ENCODE measurements at regions of chr4 and their contacts with region 1.

Region 1: DNA sequence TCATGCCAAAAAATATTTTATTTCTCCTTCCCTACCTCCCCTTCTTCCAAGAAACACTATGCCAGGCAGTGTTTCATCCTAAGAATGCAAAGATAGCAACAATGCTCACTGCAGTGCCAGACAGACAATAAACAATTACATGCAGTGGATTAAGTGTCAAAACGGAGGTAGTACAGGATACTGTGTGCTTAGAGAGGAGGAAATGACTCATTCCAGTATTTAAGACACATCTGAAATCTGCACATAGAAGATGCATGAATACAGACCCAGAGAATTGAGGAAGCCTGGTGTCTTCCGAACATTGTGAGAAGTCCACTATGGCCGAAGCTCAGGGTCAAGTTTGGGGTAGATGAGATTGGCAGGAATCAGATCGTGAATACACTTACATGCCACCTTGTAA is 326.4 kb downstream of the PPP3CA start:
- DNase-seq: peak; percentile 13
- H3K4me3 Mint-ChIP-seq: peak overlapping the region; percentile 12
- H3K27ac Mint-ChIP-seq: peak overlapping the region; percentile 50
- H3K4me1 Mint-ChIP-seq: peaks cover 58% of the 10 kb centered on the region
- H3K27me3 Mint-ChIP-seq: no peaks in the 10 kb centered on the region

Region 2: DNA sequence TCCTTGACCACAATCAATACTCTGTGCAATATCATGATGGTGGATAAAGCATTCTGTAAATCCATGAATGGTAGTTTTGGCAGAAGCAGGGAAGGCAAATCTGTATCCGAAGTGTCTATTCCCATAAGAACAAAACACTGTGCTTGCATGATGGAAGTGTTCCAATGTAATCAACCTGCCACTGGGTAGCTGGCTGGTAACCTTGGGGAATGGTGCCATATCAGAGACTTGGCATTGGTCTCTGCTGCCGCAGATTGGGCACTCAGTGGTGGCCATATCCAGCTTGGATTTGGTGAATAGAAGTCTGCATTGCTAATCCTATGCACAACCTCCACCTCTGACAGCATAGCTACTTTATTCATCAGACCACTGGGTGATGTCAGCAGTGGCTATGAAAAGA is 388.8 kb before region 1 on chr4:
- CTCF ChIA-PET with region 1: no interaction called
- POLR2A ChIA-PET with region 1: no interaction called
- intact Hi-C with region 1: no loop called
- DNase-seq: no peak
- H3K4me3 Mint-ChIP-seq: no peak overlapping the region
- H3K27ac Mint-ChIP-seq: no peak overlapping the region
- H3K4me1 Mint-ChIP-seq: no peaks in the 10 kb centered on the region
- H3K27me3 Mint-ChIP-seq: no peaks in the 10 kb centered on the region

Region 3: DNA sequence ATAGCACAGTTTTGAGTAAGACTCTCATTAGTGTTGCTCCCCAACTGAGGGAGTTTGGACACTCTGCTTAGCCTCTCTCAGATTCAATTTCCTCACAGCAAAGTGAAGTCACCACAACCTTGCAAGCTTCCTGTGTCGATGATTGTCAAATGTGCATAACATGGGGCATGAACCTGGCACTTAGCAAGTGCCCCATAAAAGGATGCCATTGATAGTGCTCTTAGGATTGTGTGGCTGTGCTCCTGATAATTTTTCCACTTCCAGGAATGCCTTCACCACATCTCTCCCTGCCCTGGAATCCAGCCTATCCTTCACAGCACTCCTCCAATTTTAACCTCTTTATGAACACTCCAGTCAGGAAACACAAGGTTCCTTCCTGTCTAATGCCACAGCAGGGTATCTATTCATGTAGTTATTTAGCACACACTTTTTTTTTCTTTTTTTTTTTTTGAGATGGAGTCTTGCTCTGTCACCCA is 17.0 kb after region 1 on chr4:
- CTCF ChIA-PET with region 1: interaction called, 4 read pairs
- POLR2A ChIA-PET with region 1: no interaction called
- intact Hi-C with region 1: loop called (anchors 1 kb)
- DNase-seq: peak; percentile 44
- H3K4me3 Mint-ChIP-seq: no peak overlapping the region
- H3K27ac Mint-ChIP-seq: peak overlapping the region; percentile 52
- H3K4me1 Mint-ChIP-seq: peaks cover 27% of the 10 kb centered on the region
- H3K27me3 Mint-ChIP-seq: no peaks in the 10 kb centered on the region

Region 4: GRCh38 chr4:101155368-101155767 is 134.4 kb after region 1 on chr4:
- CTCF ChIA-PET with region 1: interaction called, 6 read pairs
- POLR2A ChIA-PET with region 1: no interaction called
- intact Hi-C with region 1: loop called (anchors 1 kb)
- DNase-seq: no peak
- H3K4me3 Mint-ChIP-seq: no peak overlapping the region
- H3K27ac Mint-ChIP-seq: no peak overlapping the region
- H3K4me1 Mint-ChIP-seq: peaks cover 45% of the 10 kb centered on the region
- H3K27me3 Mint-ChIP-seq: no peaks in the 10 kb centered on the region

Region 5: DNA sequence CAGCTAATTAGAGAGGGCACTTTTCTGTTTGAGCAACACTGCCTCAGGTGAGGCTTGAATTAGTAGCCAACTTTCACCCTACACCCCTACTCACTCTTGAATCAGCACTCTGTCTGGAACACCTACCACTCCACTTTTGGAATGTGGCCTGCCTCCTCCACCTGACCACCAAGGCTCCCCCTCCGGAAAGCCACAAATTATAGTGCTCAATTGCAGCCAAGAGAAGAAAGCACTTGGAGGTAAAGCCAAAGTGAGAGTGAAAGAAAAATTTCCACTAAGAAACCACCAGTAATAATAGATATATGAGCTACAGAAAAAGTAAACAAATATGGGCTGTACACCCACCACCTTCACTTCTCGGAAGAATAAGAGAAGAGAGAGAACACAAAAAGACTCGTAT is 285.3 kb after region 1 on chr4:
- CTCF ChIA-PET with region 1: no interaction called
- POLR2A ChIA-PET with region 1: no interaction called
- intact Hi-C with region 1: loop called (anchors 5 kb)
- DNase-seq: peak; percentile 18
- H3K4me3 Mint-ChIP-seq: peak overlapping the region; percentile 30
- H3K27ac Mint-ChIP-seq: no peak overlapping the region
- H3K4me1 Mint-ChIP-seq: peaks cover 42% of the 10 kb centered on the region
- H3K27me3 Mint-ChIP-seq: no peaks in the 10 kb centered on the region

Region 6: DNA sequence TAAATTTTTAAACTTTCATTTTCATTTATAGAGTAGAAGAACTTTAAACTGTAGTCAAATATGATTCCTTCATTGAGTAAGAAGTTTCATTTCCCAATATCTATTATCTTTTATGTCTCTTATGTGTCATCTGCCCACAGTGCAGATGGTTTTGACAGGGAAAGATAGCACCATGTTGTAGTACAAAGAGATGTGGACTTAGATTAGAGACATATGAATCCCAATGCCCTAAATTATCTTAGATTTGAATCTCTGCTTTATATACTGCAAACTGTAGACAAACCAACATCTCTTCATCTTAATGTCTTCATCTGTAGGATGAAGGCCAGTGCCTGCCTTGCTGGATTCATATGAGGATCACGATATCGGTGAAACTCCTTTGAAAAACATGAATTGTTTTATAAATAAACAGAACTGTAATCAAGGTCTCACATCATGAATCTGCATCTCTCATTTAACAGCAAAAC is 987.0 kb after region 1 on chr4:
- CTCF ChIA-PET with region 1: no interaction called
- POLR2A ChIA-PET with region 1: no interaction called
- intact Hi-C with region 1: loop called (anchors 5 kb)
- DNase-seq: no peak
- H3K4me3 Mint-ChIP-seq: no peak overlapping the region
- H3K27ac Mint-ChIP-seq: no peak overlapping the region
- H3K4me1 Mint-ChIP-seq: peaks cover 10% of the 10 kb centered on the region
- H3K27me3 Mint-ChIP-seq: no peaks in the 10 kb centered on the region